Calu3 (cell line): ENCODE measurements at regions of chr1 and their contacts with region 1.

Region 1: GRCh38 chr1:94962409-94963265 is 35.7 kb upstream of the CNN3 start:
- DNase-seq: peak; percentile 17
- H3K4me3 Mint-ChIP-seq: peak overlapping the region; percentile 63
- H3K27ac Mint-ChIP-seq: peak overlapping the region; percentile 43
- H3K4me1 Mint-ChIP-seq: no peaks in the 10 kb centered on the region
- H3K27me3 Mint-ChIP-seq: no peaks in the 10 kb centered on the region
- CTCF ChIP-seq: no peak

Region 2: GRCh38 chr1:94925004-94925403 is 37.6 kb before region 1 on chr1:
- CTCF ChIA-PET with region 1: no interaction called
- intact Hi-C with region 1: no loop called
- DNase-seq: no peak
- H3K4me3 Mint-ChIP-seq: peak overlapping the region; percentile 98
- H3K27ac Mint-ChIP-seq: peak overlapping the region; percentile 85
- H3K4me1 Mint-ChIP-seq: peaks cover 60% of the 10 kb centered on the region
- H3K27me3 Mint-ChIP-seq: no peaks in the 10 kb centered on the region
- CTCF ChIP-seq: no peak

Region 3: DNA sequence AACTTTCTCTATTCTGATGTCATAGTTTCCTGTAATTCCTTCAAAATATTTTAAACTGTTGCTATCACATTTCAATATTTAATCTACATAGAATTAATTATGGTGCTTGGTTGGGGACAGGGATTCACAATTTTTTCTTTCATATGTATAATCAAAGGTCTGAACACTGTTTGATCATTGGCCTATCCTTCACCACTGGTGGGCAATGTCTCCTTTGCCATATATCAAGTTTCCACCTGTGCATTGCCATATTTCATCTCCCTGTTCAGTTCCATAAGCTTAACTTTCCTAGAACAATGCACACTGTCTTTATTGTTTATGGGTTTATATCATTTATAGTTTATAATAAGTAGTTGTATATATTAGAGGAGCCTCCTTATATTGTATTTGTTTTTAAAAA is 1384.1 kb after region 1 on chr1:
- CTCF ChIA-PET with region 1: interaction called, 10 read pairs
- intact Hi-C with region 1: no loop called
- DNase-seq: no peak
- H3K4me3 Mint-ChIP-seq: no peak overlapping the region
- H3K27ac Mint-ChIP-seq: no peak overlapping the region
- H3K4me1 Mint-ChIP-seq: no peaks in the 10 kb centered on the region
- H3K27me3 Mint-ChIP-seq: no peaks in the 10 kb centered on the region
- CTCF ChIP-seq: no peak